ENCODE measurements at regions of chr16 and their contacts with region 1.

Region 1: GRCh38 chr16:35492225-35492624 is 2032.8 kb downstream of the TP53TG3F start:
- DNase-seq: peak; percentile 87
- H3K4me3 ChIP-seq: peak overlapping the region; percentile 38 to 62
- H3K27ac ChIP-seq: no peak overlapping the region; a peak in 1 of 4 replicates
- H3K4me1 ChIP-seq: peaks cover 0 to 4% of the 10 kb centered on the region in 2 experiments; a peak in 2 of 4 replicates
- H3K27me3 ChIP-seq: no peaks in the 10 kb centered on the region
- CTCF ChIP-seq: peak; percentile 67
- EP300 ChIP-seq: no peak
- RAD21 ChIP-seq: peak; percentile 56

Region 2: GRCh38 chr16:35506018-35506897 is 14.0 kb after region 1 on chr16:
- CTCF ChIA-PET with region 1: interaction called, 45 read pairs
- POLR2A ChIA-PET with region 1: no interaction called
- DNase-seq: peak; percentile 96
- H3K4me3 ChIP-seq: peak overlapping the region; percentile 82 to 97
- H3K27ac ChIP-seq: peak overlapping the region; percentile 78 to 90
- H3K4me1 ChIP-seq: peaks cover 0 to 17% of the 10 kb centered on the region in 2 experiments; a peak in 2 of 4 replicates
- H3K27me3 ChIP-seq: no peaks in the 10 kb centered on the region
- CTCF ChIP-seq: peak; percentile 46
- EP300 ChIP-seq: no peak
- RAD21 ChIP-seq: no peak

Region 3: DNA sequence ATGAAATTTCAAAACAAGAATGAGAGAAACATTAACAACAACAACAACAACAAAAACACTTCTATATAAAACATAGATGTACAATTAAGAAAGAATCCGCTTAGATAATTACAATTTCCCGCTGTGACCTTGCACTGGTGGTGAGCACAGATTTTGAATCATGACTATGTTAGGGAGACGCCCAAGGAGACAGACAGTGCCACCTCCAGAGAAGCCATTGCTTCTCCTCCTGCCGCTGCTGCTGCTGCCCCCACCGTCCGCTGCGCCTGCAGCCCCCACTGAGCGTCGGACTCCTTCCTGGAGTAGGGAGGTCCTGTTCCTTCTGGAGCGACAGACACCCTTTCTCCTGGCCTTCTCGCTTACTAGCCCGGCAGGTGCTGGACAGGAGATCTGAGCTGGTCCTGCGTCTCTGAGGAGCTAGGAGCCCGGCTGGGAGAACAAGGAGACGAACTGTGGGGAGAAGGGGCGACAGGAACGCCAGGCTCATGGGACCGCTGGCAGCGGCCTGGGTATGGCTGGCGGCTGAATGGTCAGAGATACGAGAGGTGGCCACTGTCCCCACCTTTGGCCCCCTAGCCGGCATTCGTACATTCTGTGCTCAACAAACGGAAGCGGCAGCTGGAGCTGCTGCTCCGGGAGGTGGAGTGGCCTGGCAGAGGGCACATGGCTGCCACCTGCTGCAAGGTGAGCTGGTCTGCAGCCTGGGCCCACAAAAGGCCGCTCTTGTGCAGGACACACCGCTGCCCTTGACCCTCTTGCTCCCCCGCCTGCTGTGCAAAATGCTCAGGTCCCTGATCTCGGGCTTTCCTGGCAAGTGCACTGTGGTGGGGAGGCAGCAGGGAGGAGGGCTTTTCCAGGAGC is 33.7 kb after region 1 on chr16:
- CTCF ChIA-PET with region 1: interaction called, 14 read pairs
- POLR2A ChIA-PET with region 1: no interaction called
- DNase-seq: peak; percentile 59
- H3K4me3 ChIP-seq: peak overlapping the region; percentile 29 to 33; a peak in 3 of 4 replicates
- H3K27ac ChIP-seq: no peak overlapping the region; a peak in 1 of 4 replicates
- H3K4me1 ChIP-seq: peaks cover 0 to 2% of the 10 kb centered on the region in 2 experiments; a peak in 1 of 4 replicates
- H3K27me3 ChIP-seq: peaks cover 9% of the 10 kb centered on the region
- CTCF ChIP-seq: no peak
- EP300 ChIP-seq: no peak
- RAD21 ChIP-seq: peak; percentile 47

Measured in SK-N-SH (cell line).